ENCODE measurements at regions of chr6 and their contacts with region 1.

Region 1: GRCh38 chr6:14515666-14516065 is 398.1 kb downstream of the CD83 start:
- DNase-seq: no peak
- ATAC-seq: no peak
- H3K4me3 ChIP-seq: no peak overlapping the region
- H3K4me3 Mint-ChIP-seq: no peak overlapping the region
- H3K27ac ChIP-seq: no peak overlapping the region
- H3K27ac Mint-ChIP-seq: no peak overlapping the region
- H3K4me1 ChIP-seq: no peaks in the 10 kb centered on the region
- H3K4me1 Mint-ChIP-seq: peaks cover 0 to 5% (median 4%) of the 10 kb centered on the region in 3 donors
- H3K27me3 ChIP-seq: no peaks in the 10 kb centered on the region
- H3K27me3 Mint-ChIP-seq: no peaks in the 10 kb centered on the region

Region 2: GRCh38 chr6:13024616-13025015 is 1491.0 kb before region 1 on chr6:
- CTCF ChIA-PET with region 1: no interaction called
- POLR2A ChIA-PET with region 1: no interaction called
- DNase-seq: no peak
- ATAC-seq: no peak
- H3K4me3 ChIP-seq: no peak overlapping the region
- H3K4me3 Mint-ChIP-seq: no peak overlapping the region
- H3K27ac ChIP-seq: no peak overlapping the region
- H3K27ac Mint-ChIP-seq: no peak overlapping the region
- H3K4me1 ChIP-seq: no peaks in the 10 kb centered on the region
- H3K4me1 Mint-ChIP-seq: no peaks in the 10 kb centered on the region
- H3K27me3 ChIP-seq: peaks cover 0 to 4% of the 10 kb centered on the region in 2 experiments
- H3K27me3 Mint-ChIP-seq: peaks cover 25 to 29% of the 10 kb centered on the region in 2 donors

Region 3: DNA sequence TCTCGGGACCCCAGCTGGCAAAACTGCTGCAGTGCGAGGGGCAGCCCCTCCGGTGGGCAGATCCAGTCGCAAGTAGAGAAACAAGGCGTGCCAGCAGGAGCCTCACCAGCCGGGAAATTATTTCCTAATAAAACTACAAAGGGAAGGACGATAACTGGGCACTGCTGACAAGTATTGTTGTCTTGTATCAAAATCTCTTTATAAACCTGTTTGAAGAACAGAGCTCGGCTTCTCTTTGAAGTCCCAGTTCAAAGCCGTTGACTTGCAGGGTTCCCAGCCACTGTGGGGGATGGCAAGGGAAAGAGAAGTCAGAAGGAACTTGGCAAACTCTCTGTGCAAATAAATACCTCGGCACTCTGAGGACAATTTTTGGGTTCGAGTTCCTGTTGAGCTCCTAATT is 106.4 kb after region 1 on chr6:
- CTCF ChIA-PET with region 1: no interaction called
- POLR2A ChIA-PET with region 1: interaction called in 1 of 2 experiments, 14 read pairs
- DNase-seq: no peak
- ATAC-seq: no peak
- H3K4me3 ChIP-seq: no peak overlapping the region
- H3K4me3 Mint-ChIP-seq: peak overlapping the region in 1 of 3 donors; percentile 3
- H3K27ac ChIP-seq: no peak overlapping the region
- H3K27ac Mint-ChIP-seq: no peak overlapping the region
- H3K4me1 ChIP-seq: peaks cover 12 to 15% of the 10 kb centered on the region in 2 experiments
- H3K4me1 Mint-ChIP-seq: peaks cover 10 to 21% (median 14%) of the 10 kb centered on the region in 3 donors
- H3K27me3 ChIP-seq: peaks cover 0 to 6% of the 10 kb centered on the region in 2 experiments
- H3K27me3 Mint-ChIP-seq: no peaks in the 10 kb centered on the region

Region 4: DNA sequence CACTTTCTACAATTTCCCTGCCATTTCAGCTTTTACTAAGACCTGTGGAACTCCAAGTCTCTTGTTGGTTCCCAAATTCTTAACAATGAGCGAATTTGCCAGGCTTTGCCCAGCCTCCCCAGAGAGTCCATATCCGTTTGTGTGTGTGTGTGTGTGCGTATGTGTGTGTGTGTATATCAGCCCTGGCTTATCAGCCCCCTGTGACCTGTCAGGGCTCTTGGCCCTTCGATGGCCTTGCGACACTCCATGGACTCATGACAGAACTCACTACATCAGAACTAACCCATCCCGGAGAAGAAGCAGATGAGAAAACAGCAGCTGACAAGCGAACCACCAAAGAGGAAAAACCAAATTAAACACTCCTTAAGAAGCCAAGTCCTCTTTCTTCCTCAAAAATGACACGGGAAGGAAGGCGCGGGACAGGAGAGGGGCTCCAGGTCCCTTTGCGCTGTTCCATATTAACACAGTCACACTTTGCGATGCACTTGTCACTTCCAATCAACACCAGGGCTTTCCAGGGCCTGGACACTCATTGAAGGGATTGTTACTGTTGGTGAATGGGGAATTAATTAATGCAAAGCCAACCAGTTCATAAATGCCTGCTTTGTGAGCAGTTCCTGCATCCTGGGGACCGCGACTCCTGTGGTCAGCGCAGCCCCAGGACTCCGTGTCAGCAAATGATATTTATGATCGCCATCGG is 125.9 kb after region 1 on chr6:
- CTCF ChIA-PET with region 1: no interaction called
- POLR2A ChIA-PET with region 1: no interaction called
- DNase-seq: no peak
- ATAC-seq: no peak
- H3K4me3 ChIP-seq: no peak overlapping the region
- H3K4me3 Mint-ChIP-seq: no peak overlapping the region
- H3K27ac ChIP-seq: no peak overlapping the region
- H3K27ac Mint-ChIP-seq: no peak overlapping the region
- H3K4me1 ChIP-seq: peaks cover 4 to 34% of the 10 kb centered on the region in 2 experiments
- H3K4me1 Mint-ChIP-seq: peaks cover 19 to 33% (median 33%) of the 10 kb centered on the region in 3 donors
- H3K27me3 ChIP-seq: no peaks in the 10 kb centered on the region
- H3K27me3 Mint-ChIP-seq: peaks cover 3 to 4% of the 10 kb centered on the region in 2 donors

Measured in T-cell (primary cell).